Gastrocnemius medialis (tissue), 4 donors: ENCODE measurements at regions of chr20 and their contacts with region 1.

Region 1: GRCh38 chr20:35410613-35411012 is 1.2 kb downstream of the UQCC1 start:
- DNase-seq: no peak
- ATAC-seq: no peak
- H3K4me3 ChIP-seq: peak overlapping the region; percentile 57 to 89 (median 82)
- H3K27ac ChIP-seq: peak overlapping the region in 2 of 4 donors; percentile 88 to 95
- H3K4me1 ChIP-seq: peaks cover 10% of the 10 kb centered on the region in 2 donors
- H3K27me3 ChIP-seq: no peaks in the 10 kb centered on the region
- CTCF ChIP-seq: no peak
- POLR2A ChIP-seq: no peak

Region 2: DNA sequence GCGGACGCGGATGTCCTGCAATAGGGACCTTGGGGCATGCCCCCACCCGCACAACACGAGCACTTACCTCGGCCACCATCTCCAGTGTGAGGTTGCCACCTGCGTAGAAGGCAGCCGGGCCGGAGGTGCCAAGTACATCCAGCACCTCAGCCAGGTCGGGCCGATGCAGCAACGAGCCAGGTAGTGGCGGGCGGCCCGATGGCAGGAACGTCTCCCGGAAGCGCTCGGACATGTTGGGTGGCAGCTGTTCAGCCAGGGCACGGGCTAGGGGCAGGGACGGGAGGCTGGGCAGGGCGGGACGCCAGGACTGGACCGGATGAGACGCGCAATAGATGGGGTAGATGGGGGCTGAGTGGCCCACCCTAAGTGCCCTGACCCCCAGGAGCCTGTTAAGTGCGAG is 551.2 kb before region 1 on chr20:
- in situ Hi-C with region 1: no loop called
- intact Hi-C with region 1: no loop called
- DNase-seq: peak in 1 of 2 donors; percentile 37
- ATAC-seq: no peak
- H3K4me3 ChIP-seq: no peak overlapping the region
- H3K27ac ChIP-seq: peak overlapping the region in 3 of 4 donors; percentile 71 to 82 (median 73)
- H3K4me1 ChIP-seq: peaks cover 23 to 32% of the 10 kb centered on the region in 2 donors
- H3K27me3 ChIP-seq: no peaks in the 10 kb centered on the region
- CTCF ChIP-seq: no peak
- POLR2A ChIP-seq: no peak

Region 3: DNA sequence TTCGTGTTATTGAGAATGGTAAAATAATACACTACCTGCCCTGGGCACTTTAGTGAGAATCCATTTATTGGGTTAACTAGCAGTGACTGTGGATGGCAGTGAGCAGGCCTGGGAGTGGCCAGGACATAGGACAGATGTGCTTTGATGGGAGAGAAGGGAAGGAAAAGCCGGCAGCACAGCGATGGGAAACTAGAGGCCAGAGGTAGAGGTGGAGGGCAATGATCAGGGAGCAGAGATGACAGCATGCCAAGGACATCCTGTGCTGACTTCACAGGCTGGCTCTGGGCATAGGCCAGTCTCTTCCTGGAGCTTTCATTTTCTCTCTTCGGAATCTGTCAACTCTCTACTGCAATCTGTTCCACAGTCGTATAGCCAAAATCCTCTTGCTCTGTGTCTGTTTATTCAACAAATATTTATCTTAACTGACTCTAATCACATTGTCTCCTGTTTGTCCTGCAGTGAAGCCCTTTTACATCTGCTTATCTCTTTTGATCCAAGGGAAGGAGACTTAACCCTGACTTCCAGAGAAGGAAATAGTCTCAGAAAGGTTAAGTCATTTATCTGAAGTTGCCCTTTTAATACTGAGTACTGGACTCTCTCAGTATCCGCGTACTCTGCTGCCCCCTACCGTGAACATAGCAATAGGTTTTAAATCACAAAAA is 202.5 kb before region 1 on chr20:
- in situ Hi-C with region 1: no loop called
- intact Hi-C with region 1: no loop called
- DNase-seq: peak; percentile 53 to 67
- ATAC-seq: peak; percentile 90 to 95
- H3K4me3 ChIP-seq: peak overlapping the region in 3 of 4 donors; percentile 1 to 37 (median 23)
- H3K27ac ChIP-seq: peak overlapping the region; percentile 55 to 77 (median 60)
- H3K4me1 ChIP-seq: no peaks in the 10 kb centered on the region
- H3K27me3 ChIP-seq: no peaks in the 10 kb centered on the region
- CTCF ChIP-seq: peak; percentile 77 to 85 (median 81)
- POLR2A ChIP-seq: no peak

Region 4: DNA sequence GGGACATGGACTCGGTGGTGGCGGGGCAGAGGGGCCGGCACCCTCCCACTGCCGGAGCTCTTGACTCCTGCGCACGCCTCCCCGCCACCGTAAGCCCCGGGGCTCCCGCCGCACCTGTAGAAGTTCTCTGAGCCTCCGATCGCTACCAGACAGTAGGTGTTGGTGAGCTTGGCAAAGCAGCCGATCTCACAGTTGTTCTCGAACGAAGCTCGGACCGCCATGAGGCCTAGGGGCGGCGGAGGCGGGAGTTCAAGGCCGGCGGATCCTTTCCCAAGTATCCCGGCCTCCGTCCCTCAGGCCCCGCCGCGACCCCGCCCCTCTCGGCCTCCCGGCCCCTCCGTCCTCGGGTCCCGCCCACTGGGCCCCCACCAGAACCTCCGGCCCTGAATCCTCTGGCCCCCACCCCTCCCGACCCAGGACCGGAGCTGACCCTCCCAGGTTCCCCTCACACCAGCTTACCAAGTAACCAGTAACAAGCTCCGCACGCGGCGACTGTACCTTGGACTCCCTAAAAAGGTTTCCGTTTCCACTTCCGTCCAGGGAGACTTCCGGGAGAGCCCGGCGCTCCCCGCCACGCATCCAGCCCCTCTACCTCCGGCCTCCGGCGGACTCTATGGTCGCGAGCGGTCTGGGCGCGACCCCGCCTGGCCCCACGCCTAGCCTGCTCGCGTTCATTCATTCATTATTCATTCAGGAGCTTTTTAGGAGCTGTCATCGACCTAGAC is 126.2 kb before region 1 on chr20 and contains the start of gene EIF6:
- in situ Hi-C with region 1: no loop called
- intact Hi-C with region 1: loop called (anchors 5 kb)
- DNase-seq: peak; percentile 57 to 72
- ATAC-seq: peak; percentile 85 to 90
- H3K4me3 ChIP-seq: peak within 1 kb of the TSS; percentile 85 to 96 (median 91)
- H3K27ac ChIP-seq: peak within 1 kb of the TSS; percentile 82 to 90 (median 86)
- H3K4me1 ChIP-seq: peaks cover 7 to 11% of the 10 kb centered on the region in 2 donors
- H3K27me3 ChIP-seq: no peaks in the 10 kb centered on the region
- CTCF ChIP-seq: no peak
- POLR2A ChIP-seq: peak in 1 of 2 donors; percentile 40
- total RNA-seq, gene EIF6: 34.2 to 48.3 (median 47.4) TPM

Region 5: DNA sequence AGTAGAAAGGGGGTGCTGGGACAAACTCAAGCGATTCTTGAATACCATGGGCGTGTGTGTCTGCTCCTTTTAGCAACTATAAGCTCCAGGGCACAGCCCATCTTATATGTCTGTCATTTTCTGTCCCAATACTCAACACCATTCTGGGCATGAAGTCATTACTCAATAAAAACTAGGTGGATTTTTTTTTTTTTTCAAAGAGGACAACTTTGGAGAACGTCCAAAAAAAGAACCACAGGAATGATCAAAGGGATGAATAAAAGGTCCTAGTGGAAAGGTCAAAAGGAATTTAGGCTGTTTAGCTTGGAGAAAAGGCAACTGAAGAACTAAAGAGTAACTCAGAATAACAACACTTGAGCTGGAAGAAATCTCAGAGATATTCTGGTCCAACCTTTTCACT is 23.3 kb before region 1 on chr20:
- in situ Hi-C with region 1: no loop called
- intact Hi-C with region 1: no loop called
- DNase-seq: no peak
- ATAC-seq: no peak
- H3K4me3 ChIP-seq: no peak overlapping the region
- H3K27ac ChIP-seq: no peak overlapping the region
- H3K4me1 ChIP-seq: no peaks in the 10 kb centered on the region
- H3K27me3 ChIP-seq: no peaks in the 10 kb centered on the region
- CTCF ChIP-seq: no peak
- POLR2A ChIP-seq: no peak

Region 6: GRCh38 chr20:35454881-35455609 is 44.4 kb after region 1 on chr20 and contains the start of gene CEP250:
- in situ Hi-C with region 1: no loop called
- intact Hi-C with region 1: loop called (anchors 2 kb)
- DNase-seq: peak; percentile 84 to 90
- ATAC-seq: peak; percentile 92 to 94
- H3K4me3 ChIP-seq: peak within 1 kb of the TSS; percentile 69 to 99 (median 86)
- H3K27ac ChIP-seq: peak within 1 kb of the TSS; percentile 89 to 98 (median 94)
- H3K4me1 ChIP-seq: peaks cover 20 to 22% of the 10 kb centered on the region in 2 donors
- H3K27me3 ChIP-seq: no peaks in the 10 kb centered on the region
- CTCF ChIP-seq: no peak
- POLR2A ChIP-seq: peak; percentile 31 to 42
- total RNA-seq, gene CEP250: 10.9 to 13.9 (median 12.8) TPM